ENCODE measurements at regions of chr9 and their contacts with region 1.

Region 1: GRCh38 chr9:72022841-72023240 is 37.6 kb downstream of the C9orf57 start:
- DNase-seq: peak in 2 of 14 experiments; percentile 14 to 39
- ATAC-seq: no peak
- H3K4me3 ChIP-seq: no peak overlapping the region
- H3K4me3 Mint-ChIP-seq: no peak overlapping the region
- H3K27ac ChIP-seq: no peak overlapping the region
- H3K27ac Mint-ChIP-seq: no peak overlapping the region
- H3K4me1 ChIP-seq: peaks cover 4% of the 10 kb centered on the region
- H3K4me1 Mint-ChIP-seq: no peaks in the 10 kb centered on the region
- H3K27me3 ChIP-seq: no peaks in the 10 kb centered on the region
- H3K27me3 Mint-ChIP-seq: no peaks in the 10 kb centered on the region
- CTCF ChIP-seq: no peak

Region 2: DNA sequence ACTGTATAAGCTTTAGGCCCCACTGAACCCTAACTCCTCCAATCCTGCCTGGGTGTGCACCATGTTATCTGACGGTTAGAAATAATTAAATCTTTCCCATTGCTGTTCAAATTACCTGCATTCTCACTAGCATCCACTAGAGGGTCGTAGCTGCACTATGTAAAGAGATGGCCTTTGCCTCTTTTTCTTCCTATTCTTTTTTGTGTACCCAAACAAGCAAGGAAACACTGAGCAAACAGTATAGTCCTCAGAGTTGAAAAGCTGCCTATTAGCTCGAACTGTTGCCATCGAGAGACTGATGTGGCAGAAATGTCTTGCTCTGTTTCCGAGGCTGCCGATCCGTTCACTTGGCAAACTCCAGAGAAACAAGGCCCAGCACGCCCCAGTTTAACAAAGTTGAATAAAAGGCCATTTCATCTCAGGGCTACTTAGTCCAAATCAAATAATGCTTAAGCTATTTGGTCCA is 737.6 kb before region 1 on chr9:
- CTCF ChIA-PET with region 1: interaction called, 3 read pairs
- POLR2A ChIA-PET with region 1: interaction called, 3 read pairs
- intact Hi-C with region 1: loop called (anchors 1 to 5 kb)
- DNase-seq: peak in 7 of 14 experiments; percentile 6 to 56 (median 36)
- ATAC-seq: peak; percentile 51
- H3K4me3 ChIP-seq: no peak overlapping the region
- H3K4me3 Mint-ChIP-seq: no peak overlapping the region
- H3K27ac ChIP-seq: no peak overlapping the region
- H3K27ac Mint-ChIP-seq: no peak overlapping the region
- H3K4me1 ChIP-seq: no peaks in the 10 kb centered on the region
- H3K4me1 Mint-ChIP-seq: no peaks in the 10 kb centered on the region
- H3K27me3 ChIP-seq: no peaks in the 10 kb centered on the region
- H3K27me3 Mint-ChIP-seq: no peaks in the 10 kb centered on the region
- CTCF ChIP-seq: peak; percentile 76

Region 3: GRCh38 chr9:71783120-71783530 is 239.7 kb before region 1 on chr9:
- CTCF ChIA-PET with region 1: interaction called, 12 read pairs
- POLR2A ChIA-PET with region 1: interaction called, 3 read pairs
- intact Hi-C with region 1: no loop called
- DNase-seq: peak; percentile 74 to 96 (median 82)
- ATAC-seq: peak; percentile 94
- H3K4me3 ChIP-seq: peak overlapping the region; percentile 8
- H3K4me3 Mint-ChIP-seq: peak overlapping the region; percentile 64
- H3K27ac ChIP-seq: peak overlapping the region; percentile 81 to 90
- H3K27ac Mint-ChIP-seq: peak overlapping the region; percentile 97
- H3K4me1 ChIP-seq: peaks cover 32% of the 10 kb centered on the region
- H3K4me1 Mint-ChIP-seq: peaks cover 51% of the 10 kb centered on the region
- H3K27me3 ChIP-seq: no peaks in the 10 kb centered on the region
- H3K27me3 Mint-ChIP-seq: no peaks in the 10 kb centered on the region
- CTCF ChIP-seq: peak; percentile 65

Region 4: DNA sequence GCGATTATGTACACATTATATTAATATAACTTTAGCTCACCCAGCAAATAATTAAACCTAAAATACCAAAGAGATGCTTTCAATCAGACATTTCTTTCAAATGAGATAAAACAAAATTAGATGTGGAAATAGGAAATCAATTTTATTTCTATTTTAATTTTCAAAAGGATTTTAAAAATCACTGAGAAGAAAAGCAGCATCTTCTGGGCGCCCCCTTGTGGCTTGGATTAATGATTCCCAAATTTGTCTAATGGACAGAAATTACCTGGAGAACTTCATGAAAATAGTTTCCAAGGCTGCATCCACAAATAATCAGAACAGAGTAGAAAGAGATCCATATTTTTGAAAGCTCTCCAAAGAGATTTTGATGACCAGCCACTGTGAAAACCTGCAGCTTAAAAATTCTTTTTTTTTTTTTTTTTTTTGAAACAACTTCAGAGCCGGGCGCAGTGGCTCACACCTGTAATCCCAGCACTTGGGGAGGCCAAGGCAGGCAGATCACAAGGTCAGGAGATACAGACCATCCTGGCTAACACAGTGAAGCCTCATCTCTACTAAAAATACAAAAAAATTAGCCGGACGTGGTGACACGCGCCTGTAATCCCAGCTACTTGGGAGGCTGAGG is 203.6 kb before region 1 on chr9:
- CTCF ChIA-PET with region 1: no interaction called
- POLR2A ChIA-PET with region 1: no interaction called
- intact Hi-C with region 1: loop called in 1 of 2 experiments (anchors 5 kb)
- DNase-seq: peak; percentile 12 to 82 (median 46)
- ATAC-seq: no peak
- H3K4me3 ChIP-seq: no peak overlapping the region
- H3K4me3 Mint-ChIP-seq: no peak overlapping the region
- H3K27ac ChIP-seq: no peak overlapping the region
- H3K27ac Mint-ChIP-seq: no peak overlapping the region
- H3K4me1 ChIP-seq: peaks cover 4% of the 10 kb centered on the region
- H3K4me1 Mint-ChIP-seq: peaks cover 23% of the 10 kb centered on the region
- H3K27me3 ChIP-seq: no peaks in the 10 kb centered on the region
- H3K27me3 Mint-ChIP-seq: no peaks in the 10 kb centered on the region
- CTCF ChIP-seq: peak; percentile 95

Region 5: GRCh38 chr9:72038890-72039410 is 16.1 kb after region 1 on chr9:
- CTCF ChIA-PET with region 1: interaction called, 26 read pairs
- POLR2A ChIA-PET with region 1: no interaction called
- intact Hi-C with region 1: no loop called
- DNase-seq: peak; percentile 23 to 76 (median 51)
- ATAC-seq: peak; percentile 64
- H3K4me3 ChIP-seq: no peak overlapping the region
- H3K4me3 Mint-ChIP-seq: no peak overlapping the region
- H3K27ac ChIP-seq: no peak overlapping the region
- H3K27ac Mint-ChIP-seq: no peak overlapping the region
- H3K4me1 ChIP-seq: peaks cover 9% of the 10 kb centered on the region
- H3K4me1 Mint-ChIP-seq: peaks cover 7% of the 10 kb centered on the region
- H3K27me3 ChIP-seq: peaks cover 0 to 4% of the 10 kb centered on the region in 2 experiments
- H3K27me3 Mint-ChIP-seq: peaks cover 11% of the 10 kb centered on the region
- CTCF ChIP-seq: peak; percentile 97

Region 6: DNA sequence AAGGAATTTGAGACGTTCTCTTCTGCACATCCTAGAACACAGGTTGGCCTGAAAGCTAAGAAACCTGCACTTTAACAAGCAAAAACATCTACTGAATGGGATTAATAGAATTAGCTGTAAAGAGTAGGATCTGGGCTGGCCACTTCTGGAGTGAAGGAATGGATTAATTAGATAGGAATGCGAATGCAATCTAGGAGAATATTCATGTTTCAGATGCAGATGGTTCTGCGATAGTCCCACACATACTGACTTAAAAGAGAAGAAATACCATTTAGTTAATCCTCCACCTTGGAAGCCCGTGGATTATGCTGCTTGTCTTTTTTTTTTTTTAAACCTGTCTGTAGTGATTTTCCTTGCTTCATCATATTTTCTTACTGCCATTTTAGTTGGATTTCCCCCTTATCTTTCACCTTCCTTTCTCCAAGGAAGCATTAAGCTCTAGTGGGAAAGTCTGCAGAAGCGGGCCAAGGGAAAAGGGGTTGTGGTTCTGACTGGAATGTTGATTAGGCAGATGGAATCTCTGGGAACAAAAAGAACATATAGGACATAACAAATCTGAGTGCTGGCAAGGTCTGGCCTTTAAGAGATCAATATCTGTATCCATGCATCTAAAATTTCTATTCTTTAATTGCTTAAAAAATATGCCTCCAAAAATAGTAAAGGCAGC is 777.6 kb after region 1 on chr9:
- CTCF ChIA-PET with region 1: no interaction called
- POLR2A ChIA-PET with region 1: no interaction called
- intact Hi-C with region 1: no loop called
- DNase-seq: no peak
- ATAC-seq: no peak
- H3K4me3 ChIP-seq: no peak overlapping the region
- H3K4me3 Mint-ChIP-seq: no peak overlapping the region
- H3K27ac ChIP-seq: no peak overlapping the region
- H3K27ac Mint-ChIP-seq: no peak overlapping the region
- H3K4me1 ChIP-seq: no peaks in the 10 kb centered on the region
- H3K4me1 Mint-ChIP-seq: no peaks in the 10 kb centered on the region
- H3K27me3 ChIP-seq: no peaks in the 10 kb centered on the region
- H3K27me3 Mint-ChIP-seq: no peaks in the 10 kb centered on the region
- CTCF ChIP-seq: no peak

Measured in CD4-positive, alpha-beta T cell (primary cell).